Left colon (tissue), 2 donors: ENCODE measurements at regions of chr9 and their contacts with region 1.

Region 1: GRCh38 chr9:115591584-115591984 is 473.6 kb upstream of the TNC start:
- DNase-seq: peak; percentile 39 to 47
- ATAC-seq: peak; percentile 99

Region 2: GRCh38 chr9:115808695-115809094 is 217.1 kb after region 1 on chr9:
- intact Hi-C with region 1: no loop called
- DNase-seq: no peak
- ATAC-seq: no peak

Region 3: GRCh38 chr9:115900699-115901098 is 309.1 kb after region 1 on chr9:
- intact Hi-C with region 1: no loop called
- DNase-seq: no peak
- ATAC-seq: no peak

Region 4: DNA sequence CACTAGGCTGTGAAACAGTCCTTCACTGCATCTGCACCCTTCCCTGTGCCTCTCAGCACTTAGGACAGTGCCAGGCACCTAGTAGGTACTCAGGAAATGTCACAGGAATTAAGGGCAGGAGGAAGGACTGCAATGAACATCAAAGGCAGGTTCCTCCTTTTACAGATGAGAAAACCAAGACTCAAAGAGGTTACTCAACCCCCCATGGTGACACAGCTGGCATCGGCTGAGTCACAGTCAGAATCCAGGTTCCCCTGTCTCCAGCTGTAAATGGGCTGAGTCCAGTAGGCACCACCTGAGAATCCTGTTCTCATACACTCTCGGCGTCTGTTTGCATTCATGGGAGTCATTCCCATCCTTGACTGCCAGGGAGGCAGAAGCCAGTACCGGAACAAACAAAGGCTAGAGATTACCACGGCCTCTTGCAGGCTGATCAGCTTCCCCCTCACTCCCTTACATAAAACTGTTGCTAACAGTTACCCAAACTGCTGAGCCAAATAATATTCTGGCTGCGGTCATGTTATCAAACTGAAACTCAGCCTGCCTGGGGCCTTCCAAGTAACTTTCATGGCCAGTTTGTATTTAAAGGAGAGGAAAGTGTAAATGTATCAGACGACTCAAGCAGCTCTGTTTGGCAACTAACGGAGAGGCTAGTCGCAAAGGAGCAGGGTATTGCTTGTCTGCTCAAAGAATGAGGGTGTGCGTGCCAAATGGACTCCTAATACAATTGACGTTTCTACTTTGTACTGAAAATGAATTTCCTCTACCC is 763.8 kb after region 1 on chr9:
- intact Hi-C with region 1: loop called in 1 of 2 experiments (anchors 10 kb)
- DNase-seq: no peak
- ATAC-seq: no peak

Region 5: DNA sequence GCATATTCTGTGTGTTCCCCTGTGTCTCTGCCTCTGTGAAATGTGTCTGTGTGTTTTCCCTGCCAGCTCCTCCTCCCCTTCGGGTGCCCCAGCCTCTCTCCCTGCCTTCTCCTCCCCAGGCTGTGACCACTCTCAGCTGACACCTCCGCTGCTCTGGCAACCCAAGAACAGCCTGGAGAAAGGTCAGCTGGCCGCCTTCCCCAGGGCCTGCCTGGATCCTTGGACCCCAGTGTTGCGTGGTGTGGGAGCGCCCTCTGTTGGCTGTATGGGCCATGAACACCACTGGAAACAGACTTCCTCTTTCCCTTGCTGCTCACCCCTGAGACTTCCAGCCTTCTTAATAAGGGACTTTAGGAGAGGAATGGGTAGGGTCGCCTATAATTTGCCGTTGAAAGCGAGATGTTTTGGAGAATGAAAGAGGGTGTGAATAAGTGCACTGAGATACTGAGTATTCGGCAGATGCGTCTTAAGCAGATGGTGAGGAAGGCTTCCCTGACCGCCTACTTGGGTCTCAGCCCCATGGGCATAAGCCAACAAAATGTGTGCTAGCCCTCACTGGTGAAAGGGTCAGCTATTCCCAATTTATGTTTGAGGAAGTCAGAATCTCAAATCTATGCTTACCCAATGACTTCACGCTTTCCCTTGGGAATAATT is 980.6 kb after region 1 on chr9:
- intact Hi-C with region 1: loop called in 1 of 2 experiments (anchors 5 kb)
- DNase-seq: peak; percentile 75 to 86
- ATAC-seq: peak; percentile 80